ENCODE measurements at regions of chr17 and their contacts with region 1.

Region 1: GRCh38 chr17:27455914-27456680 is at the start of gene KSR1:
- DNase-seq: peak; percentile 89
- ATAC-seq: peak; percentile 96
- total RNA-seq, gene KSR1: 8.3 TPM

Region 2: GRCh38 chr17:27236717-27237315 is 219.3 kb before region 1 on chr17:
- intact Hi-C with region 1: loop called (anchors 10 kb)
- DNase-seq: no peak
- ATAC-seq: peak; percentile 80

Region 3: GRCh38 chr17:27367121-27367991 is 88.7 kb before region 1 on chr17:
- intact Hi-C with region 1: no loop called
- DNase-seq: peak; percentile 49
- ATAC-seq: peak; percentile 75

Region 4: GRCh38 chr17:27381007-27381501 is 75.0 kb before region 1 on chr17:
- intact Hi-C with region 1: no loop called
- DNase-seq: peak; percentile 83
- ATAC-seq: peak; percentile 55

Region 5: DNA sequence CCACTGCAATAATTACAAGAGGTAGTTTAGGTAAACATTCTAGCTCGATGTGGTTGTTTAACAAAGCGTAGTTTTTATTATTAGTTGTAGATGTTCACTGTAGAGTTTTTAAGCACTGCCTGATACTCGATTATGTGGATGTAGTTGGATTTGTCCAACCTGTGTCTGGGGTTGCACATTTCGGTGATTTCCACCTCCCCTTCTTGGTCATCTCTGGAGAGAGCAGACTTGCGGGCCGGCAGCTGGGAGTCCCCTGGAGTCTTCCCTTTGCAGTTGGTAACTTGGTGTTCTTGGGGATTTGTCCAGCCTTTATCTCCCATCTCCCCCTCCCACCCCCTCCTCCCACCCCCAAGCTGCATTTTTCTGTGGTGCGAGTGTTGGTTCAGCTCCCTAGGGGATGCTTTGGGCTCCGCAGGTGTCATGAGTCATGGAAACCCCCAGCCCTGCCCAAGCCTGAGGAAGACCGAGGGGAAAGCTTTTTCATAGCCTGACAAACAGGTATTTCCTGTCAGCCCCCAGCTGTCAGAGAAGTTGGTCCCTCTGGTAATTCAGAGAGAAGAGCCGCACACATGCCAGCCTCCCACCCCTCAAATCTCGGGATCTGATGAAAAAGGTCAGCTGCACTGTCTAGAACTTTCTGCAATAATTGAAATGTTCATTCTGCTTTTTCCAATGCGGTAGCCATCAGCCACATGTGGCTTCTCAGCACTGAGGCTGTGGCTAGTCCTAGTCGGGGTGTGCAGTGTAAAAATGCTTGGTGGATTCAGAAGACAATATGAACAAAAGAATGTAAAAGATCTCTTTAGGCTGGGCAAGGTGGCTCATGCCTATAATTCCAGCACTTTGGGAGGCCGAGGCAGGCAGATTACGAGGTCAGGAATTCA is 50.5 kb after region 1 on chr17:
- intact Hi-C with region 1: no loop called
- DNase-seq: no peak
- ATAC-seq: no peak

Region 6: GRCh38 chr17:27559506-27560481 is 103.7 kb after region 1 on chr17:
- intact Hi-C with region 1: loop called (anchors 5 kb)
- DNase-seq: peak; percentile 84
- ATAC-seq: peak; percentile 91

Measured in Right ventricle myocardium superior (tissue), 1 donor.